Aorta (tissue), 5 donors: ENCODE measurements at regions of chr2 and their contacts with region 1.

Region 1: GRCh38 chr2:113370478-113371091 is 66.9 kb upstream of the ZNG1B start:
- DNase-seq: peak in 1 of 2 donors; percentile 69
- ATAC-seq: peak; percentile 88
- H3K4me3 ChIP-seq: no peak overlapping the region
- H3K27ac ChIP-seq: no peak overlapping the region
- H3K4me1 ChIP-seq: no peaks in the 10 kb centered on the region
- H3K27me3 ChIP-seq: no peaks in the 10 kb centered on the region

Region 2: DNA sequence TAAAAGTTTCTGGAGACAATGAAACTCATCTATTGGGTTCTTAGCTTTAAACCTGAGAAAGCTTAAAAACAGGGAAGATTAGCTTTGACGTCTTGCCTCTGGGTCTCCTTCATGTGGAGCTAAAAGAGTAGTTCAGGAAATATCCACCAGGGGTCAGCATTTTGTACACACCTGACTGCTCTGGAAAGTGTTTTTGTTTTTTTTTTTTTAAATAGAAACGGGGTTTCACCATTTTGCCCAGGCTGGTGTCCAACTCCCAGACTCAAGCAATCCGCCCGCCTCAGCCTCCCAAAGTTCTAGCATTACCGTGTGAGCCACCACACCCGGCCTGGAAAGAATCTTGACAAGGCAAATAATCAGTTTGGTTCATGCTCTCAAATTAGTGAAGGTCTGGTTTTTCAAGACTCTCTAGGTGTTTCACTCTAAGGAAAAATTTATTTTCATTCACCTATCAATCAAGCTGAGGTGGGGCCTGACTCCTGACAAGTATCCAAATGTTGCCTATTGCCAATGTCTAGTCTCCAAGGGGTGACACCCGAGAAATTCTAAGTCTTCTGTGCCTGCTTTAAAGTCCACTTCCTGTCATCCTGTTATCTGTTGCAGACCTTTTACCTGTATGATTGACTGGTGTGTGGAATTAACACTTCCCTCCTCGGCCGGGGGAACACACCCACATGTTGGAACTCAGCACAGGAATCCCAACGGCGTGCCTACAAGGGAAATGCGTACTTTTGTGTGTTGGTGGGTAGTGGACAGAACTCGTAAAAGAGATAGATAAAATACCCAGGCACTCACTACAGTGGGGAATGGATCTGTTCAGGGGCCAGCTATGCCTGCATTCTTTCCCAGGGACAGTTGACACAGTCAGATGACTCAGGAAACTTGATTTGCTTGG is 231.9 kb before region 1 on chr2:
- intact Hi-C with region 1: loop called in 1 of 2 experiments (anchors 10 kb)
- DNase-seq: no peak
- ATAC-seq: peak; percentile 76
- H3K4me3 ChIP-seq: no peak overlapping the region
- H3K27ac ChIP-seq: no peak overlapping the region
- H3K4me1 ChIP-seq: no peaks in the 10 kb centered on the region
- H3K27me3 ChIP-seq: peaks cover 0 to 3% of the 10 kb centered on the region in 2 donors

Region 3: DNA sequence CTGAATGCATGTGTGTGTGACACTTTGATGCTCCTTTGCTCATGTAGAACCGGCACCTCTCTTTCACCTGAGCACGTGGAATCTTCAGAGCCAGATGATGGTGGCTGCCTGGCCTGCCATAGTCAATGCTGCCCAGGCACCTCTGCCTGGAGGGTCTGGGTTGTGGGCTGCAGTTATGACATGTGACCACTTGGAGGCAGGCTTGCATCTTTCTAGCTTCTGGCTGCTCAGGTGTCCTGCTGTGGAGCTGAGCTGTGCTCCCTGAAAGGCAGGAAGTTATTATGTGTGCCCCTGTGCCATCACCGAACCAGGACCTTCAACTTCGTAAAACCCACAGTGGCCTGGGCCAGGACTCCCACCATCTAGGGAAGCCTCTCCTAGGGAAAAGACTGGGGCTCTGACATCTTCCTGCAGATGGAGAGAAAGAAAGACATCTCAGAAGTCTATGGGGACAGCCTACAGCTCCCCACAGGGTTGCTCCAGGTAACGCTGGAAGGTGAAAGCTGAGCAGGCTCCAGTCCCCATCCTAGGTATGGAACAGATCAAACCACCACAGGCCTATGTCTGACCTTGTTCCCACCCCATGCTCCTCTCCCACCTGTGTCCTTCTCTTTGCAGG is 166.6 kb before region 1 on chr2:
- intact Hi-C with region 1: loop called (anchors 2 to 5 kb)
- DNase-seq: peak; percentile 77 to 80
- ATAC-seq: peak; percentile 61
- H3K4me3 ChIP-seq: no peak overlapping the region
- H3K27ac ChIP-seq: no peak overlapping the region
- H3K4me1 ChIP-seq: no peaks in the 10 kb centered on the region
- H3K27me3 ChIP-seq: no peaks in the 10 kb centered on the region

Region 4: DNA sequence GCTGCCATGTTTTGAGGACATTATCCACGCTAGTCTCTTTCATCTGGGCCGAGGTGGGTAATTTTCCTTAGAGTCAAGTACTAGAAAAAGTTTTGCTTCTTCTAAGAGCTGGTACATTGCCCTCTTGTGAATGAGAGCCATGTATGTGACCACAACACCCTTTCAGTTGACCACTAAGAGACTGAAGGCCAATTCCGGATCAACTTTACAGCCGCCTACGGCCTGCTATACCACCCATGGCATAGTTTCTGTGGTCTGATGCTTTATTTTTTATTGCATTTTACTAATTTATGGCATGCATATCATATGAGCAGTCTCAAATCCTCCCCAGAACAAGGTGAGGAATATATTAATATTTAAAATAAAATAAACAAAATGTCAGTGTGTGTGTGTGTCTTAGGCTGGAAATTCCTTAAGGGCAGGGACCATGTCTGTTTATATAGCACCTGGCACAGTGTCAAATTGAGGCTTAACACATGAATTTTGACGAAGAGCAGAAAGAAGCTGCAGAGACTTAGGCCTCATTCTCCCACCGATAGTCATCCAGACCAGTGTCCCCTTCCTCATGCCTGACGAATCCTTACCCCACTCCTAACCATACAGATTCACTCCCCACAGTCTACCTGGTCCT is 161.5 kb before region 1 on chr2:
- intact Hi-C with region 1: loop called (anchors 2 to 5 kb)
- DNase-seq: peak in 1 of 2 donors; percentile 12
- ATAC-seq: no peak
- H3K4me3 ChIP-seq: no peak overlapping the region
- H3K27ac ChIP-seq: no peak overlapping the region
- H3K4me1 ChIP-seq: no peaks in the 10 kb centered on the region
- H3K27me3 ChIP-seq: no peaks in the 10 kb centered on the region

Region 5: GRCh38 chr2:113248997-113249770 is 121.4 kb before region 1 on chr2:
- intact Hi-C with region 1: loop called (anchors 1 kb)
- DNase-seq: peak; percentile 86 to 91
- ATAC-seq: peak; percentile 84
- H3K4me3 ChIP-seq: no peak overlapping the region
- H3K27ac ChIP-seq: no peak overlapping the region
- H3K4me1 ChIP-seq: no peaks in the 10 kb centered on the region
- H3K27me3 ChIP-seq: no peaks in the 10 kb centered on the region

Region 6: DNA sequence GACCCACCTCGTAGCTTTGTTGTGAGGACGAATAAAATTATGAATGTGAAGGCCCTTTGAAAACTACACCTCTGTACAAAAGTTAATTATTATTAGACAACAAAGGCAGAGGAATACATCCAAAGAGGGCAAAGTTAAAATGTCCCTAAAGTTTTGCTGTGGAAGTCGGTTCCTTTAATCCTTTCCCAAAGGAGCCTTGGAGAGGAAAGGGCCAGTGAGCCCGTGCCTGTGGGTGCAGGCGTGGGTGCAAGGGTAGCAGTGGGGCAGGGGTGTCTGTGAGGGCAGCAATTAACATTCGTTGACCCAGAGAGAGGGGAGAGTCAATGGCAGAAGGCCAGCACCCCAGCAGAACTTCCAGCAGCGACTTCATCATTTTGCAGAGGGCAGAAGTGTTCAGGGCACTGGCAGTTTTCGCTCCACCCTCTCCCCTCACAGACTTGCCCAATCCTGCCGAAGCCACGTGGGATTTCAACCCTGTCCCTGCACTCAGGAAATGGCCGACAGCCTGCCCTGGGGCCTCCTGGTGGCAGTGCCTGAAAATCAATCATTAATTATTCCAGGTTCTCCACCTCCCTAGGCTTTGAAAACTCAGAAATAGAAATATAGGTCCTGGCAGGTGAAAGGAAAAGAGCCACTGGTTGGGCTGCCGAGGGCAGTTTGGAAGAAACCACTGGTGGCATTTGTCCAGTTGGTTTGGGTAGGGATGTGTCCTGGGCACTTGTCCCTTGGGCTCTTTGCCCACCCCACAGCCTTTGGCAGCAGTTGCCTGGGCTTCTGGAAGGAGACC is 87.6 kb before region 1 on chr2:
- intact Hi-C with region 1: no loop called
- DNase-seq: peak; percentile 75 to 80
- ATAC-seq: peak; percentile 4
- H3K4me3 ChIP-seq: no peak overlapping the region
- H3K27ac ChIP-seq: peak overlapping the region; percentile 70 to 91
- H3K4me1 ChIP-seq: peaks cover 0 to 8% of the 10 kb centered on the region in 2 donors
- H3K27me3 ChIP-seq: no peaks in the 10 kb centered on the region